Right ventricle myocardium superior (tissue), 1 donor: ENCODE measurements at regions of chr11 and their contacts with region 1.

Region 1: DNA sequence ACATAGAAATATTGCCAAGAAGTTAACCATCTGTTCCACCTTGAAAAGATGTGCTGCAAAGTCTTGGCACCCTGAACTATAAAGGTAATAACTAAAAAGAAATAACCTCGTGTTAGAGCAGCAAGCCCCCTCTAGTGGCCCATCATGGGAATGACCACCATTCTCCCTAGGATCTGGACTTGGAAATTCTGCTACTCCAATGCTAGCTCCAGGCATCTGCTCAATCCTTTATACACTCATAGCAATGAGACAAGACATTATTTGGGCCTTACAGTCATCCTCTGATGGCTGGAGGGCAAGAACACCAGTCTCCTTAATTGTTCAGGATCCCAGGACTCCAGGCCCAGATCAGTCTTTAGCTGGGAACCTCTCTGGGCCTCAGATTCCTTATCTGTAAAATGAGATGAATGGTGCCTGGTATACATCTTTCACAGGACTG is 76.0 kb downstream of the CWC15 start:
- DNase-seq: no peak
- ATAC-seq: peak; percentile 64

Region 2: GRCh38 chr11:94767761-94768601 is 129.4 kb before region 1 on chr11 and contains the start of gene AMOTL1:
- intact Hi-C with region 1: loop called (anchors 10 kb)
- DNase-seq: peak; percentile 92
- ATAC-seq: peak; percentile 93
- total RNA-seq, gene AMOTL1: 45.5 TPM

Region 3: DNA sequence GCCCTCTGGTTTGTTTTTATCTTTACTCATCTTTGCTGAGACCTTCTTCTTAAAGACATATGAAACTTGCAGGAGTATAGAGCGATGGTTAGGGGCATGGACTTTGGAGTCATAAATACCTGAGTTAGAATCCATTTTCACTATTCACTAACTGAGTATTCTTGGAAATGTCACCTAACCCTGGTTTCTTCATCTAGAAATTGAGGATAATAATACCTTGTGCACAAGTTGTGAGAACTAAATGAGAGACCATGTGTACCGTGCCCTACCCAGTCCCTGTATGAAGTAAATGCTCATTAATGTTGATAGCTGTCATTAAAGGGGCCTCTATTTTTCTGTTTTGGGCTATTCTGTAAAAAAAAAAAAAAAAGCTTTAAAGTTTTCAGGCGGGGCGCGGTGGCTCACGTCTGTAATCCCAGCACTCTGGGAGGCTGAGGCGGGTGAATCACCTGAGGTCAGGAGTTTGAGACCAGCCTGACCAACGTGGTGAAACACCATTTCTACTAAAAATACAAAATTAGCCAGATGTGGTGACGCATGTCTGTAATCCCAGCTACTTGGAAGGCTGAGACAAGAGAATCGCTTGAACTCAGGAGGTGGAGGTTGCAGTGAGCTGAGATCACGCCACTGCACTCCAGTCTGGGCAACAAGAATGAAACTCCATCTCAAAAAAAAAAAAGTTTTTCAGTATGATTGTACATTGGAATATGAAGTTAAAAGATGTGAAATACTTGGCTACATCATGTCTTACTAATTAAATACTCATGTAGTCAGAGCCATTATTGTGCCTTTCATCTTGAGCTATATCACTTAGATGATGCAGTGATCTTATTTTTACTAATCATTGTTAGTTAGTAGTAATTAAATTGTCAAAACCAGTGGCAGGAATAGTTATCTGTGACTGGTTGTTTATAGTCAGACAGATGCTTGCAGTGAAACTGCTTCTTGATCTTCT is 34.1 kb before region 1 on chr11:
- intact Hi-C with region 1: no loop called
- DNase-seq: no peak
- ATAC-seq: no peak